ENCODE measurements at regions of chr14 and their contacts with region 1.

Region 1: GRCh38 chr14:29548948-29549370 is 378.7 kb downstream of the PRKD1 start:
- DNase-seq: no peak
- H3K4me3 ChIP-seq: no peak overlapping the region
- H3K27ac ChIP-seq: no peak overlapping the region
- H3K4me1 ChIP-seq: no peaks in the 10 kb centered on the region
- H3K27me3 ChIP-seq: no peaks in the 10 kb centered on the region
- CTCF ChIP-seq: peak; percentile 49

Region 2: DNA sequence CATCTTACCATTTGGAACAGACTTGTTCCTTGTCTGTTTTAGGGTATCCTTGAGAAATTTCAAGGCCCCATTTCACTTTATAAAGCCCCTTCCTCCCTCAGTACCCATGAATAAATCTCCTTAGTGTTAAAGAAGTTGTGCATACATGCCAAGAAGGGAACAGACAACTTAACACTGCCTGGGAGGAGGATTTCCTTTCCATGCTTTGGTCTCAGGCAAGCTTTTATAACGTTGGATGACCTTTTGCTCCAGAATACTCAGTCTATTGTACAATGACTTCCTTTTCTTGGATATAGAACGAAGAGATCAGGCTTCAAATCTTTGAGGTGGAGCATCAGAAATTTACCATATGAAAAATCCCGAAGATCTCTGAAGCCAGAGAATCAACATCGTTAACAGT is 172.7 kb before region 1 on chr14:
- intact Hi-C with region 1: no loop called
- DNase-seq: no peak
- H3K4me3 ChIP-seq: no peak overlapping the region
- H3K27ac ChIP-seq: no peak overlapping the region
- H3K4me1 ChIP-seq: no peaks in the 10 kb centered on the region
- H3K27me3 ChIP-seq: no peaks in the 10 kb centered on the region
- CTCF ChIP-seq: no peak

Region 3: GRCh38 chr14:29601616-29602015 is 52.7 kb after region 1 on chr14:
- intact Hi-C with region 1: no loop called
- DNase-seq: no peak
- H3K4me3 ChIP-seq: no peak overlapping the region
- H3K27ac ChIP-seq: no peak overlapping the region
- H3K4me1 ChIP-seq: no peaks in the 10 kb centered on the region
- H3K27me3 ChIP-seq: no peaks in the 10 kb centered on the region
- CTCF ChIP-seq: no peak

Region 4: DNA sequence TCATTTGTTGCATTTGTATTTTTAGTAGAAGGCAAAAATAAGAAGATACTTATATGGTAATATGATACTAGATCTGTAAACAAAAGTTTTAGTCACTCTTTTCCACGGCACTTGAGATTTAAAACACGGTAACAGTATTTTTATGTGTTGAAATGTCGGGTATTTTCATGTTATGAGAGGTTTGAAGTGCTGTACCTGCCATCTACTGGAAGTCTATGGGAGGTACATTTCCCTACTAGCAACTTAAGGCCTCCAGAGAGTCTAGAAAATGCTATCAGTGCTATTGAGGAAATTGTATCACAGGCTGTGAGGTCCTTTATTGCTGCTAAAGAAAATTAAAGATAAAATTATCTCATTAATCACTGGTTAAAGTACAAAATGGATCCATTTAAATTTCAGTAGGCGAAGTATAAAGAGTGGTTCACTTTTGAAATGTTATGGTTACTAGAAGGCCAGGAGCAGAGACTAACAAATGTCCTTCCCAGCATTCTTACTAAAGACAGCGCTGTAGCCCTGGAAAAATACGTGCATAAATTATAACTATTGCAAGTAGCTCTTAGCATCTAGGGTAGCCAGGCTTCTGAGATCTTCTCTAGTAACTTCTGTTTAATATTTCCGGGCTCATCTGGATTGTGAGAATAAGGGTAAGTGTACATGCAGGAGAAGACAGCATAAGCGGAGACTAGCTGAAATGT is 456.3 kb after region 1 on chr14:
- intact Hi-C with region 1: loop called (anchors 5 kb)
- DNase-seq: no peak
- H3K4me3 ChIP-seq: no peak overlapping the region
- H3K27ac ChIP-seq: no peak overlapping the region
- H3K4me1 ChIP-seq: no peaks in the 10 kb centered on the region
- H3K27me3 ChIP-seq: no peaks in the 10 kb centered on the region
- CTCF ChIP-seq: peak; percentile 66

Region 5: DNA sequence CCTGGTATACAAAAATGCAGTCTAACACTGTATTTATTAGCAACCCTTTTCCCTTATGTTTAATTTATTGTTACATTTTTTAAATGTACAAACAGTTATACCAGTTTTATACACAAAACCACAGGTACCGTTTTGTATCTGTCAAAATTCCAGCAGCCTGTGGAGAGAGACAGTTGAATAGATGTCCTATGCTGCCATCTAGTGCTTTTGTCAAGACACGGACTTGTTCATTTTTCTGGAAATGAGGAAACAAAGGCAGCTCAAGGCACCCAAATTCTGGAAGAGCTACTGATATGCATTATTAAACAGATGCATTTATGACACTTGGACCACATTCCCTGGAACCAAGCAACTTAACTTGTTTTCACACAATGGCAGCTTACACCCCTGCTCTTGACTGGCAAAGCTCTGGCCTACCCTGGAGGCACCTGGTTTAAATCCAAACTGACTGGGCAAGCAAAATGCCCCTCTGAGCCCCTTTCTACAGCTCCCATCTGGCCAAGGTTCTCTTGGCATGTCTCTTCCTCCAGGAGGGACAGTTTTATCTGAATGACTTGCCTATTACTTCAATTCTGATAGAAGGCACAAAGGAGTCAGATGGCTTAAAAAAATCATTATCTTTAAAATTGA is 665.6 kb after region 1 on chr14:
- intact Hi-C with region 1: loop called (anchors 2 kb)
- DNase-seq: no peak
- H3K4me3 ChIP-seq: no peak overlapping the region
- H3K27ac ChIP-seq: no peak overlapping the region
- H3K4me1 ChIP-seq: no peaks in the 10 kb centered on the region
- H3K27me3 ChIP-seq: no peaks in the 10 kb centered on the region
- CTCF ChIP-seq: peak; percentile 35

Measured in colonic mucosa (tissue), 4 donors.